RWPE1 (cell line): ENCODE measurements at regions of chr12 and their contacts with region 1.

Region 1: GRCh38 chr12:95217377-95218149 is at the starts of genes FGD6 and VEZT:
- DNase-seq: peak; percentile 94
- H3K27ac ChIP-seq: peak within 1 kb of the TSS; percentile 97
- CTCF ChIP-seq: peak; percentile 82

Region 2: GRCh38 chr12:95117178-95117599 is 100.4 kb before region 1 on chr12:
- CTCF ChIA-PET with region 1: interaction called, 16 read pairs
- POLR2A ChIA-PET with region 1: interaction called, 5 read pairs
- DNase-seq: no peak
- H3K27ac ChIP-seq: peak overlapping the region; percentile 93
- CTCF ChIP-seq: peak; percentile 66

Region 3: GRCh38 chr12:95205685-95206084 is 11.9 kb before region 1 on chr12:
- CTCF ChIA-PET with region 1: interaction called, 9 read pairs
- POLR2A ChIA-PET with region 1: interaction called, 12 read pairs
- DNase-seq: peak; percentile 68
- H3K27ac ChIP-seq: peak overlapping the region; percentile 93
- CTCF ChIP-seq: no peak